Lower lobe of right lung (tissue), 2 donors: ENCODE measurements at regions of chr19 and their contacts with region 1.

Region 1: DNA sequence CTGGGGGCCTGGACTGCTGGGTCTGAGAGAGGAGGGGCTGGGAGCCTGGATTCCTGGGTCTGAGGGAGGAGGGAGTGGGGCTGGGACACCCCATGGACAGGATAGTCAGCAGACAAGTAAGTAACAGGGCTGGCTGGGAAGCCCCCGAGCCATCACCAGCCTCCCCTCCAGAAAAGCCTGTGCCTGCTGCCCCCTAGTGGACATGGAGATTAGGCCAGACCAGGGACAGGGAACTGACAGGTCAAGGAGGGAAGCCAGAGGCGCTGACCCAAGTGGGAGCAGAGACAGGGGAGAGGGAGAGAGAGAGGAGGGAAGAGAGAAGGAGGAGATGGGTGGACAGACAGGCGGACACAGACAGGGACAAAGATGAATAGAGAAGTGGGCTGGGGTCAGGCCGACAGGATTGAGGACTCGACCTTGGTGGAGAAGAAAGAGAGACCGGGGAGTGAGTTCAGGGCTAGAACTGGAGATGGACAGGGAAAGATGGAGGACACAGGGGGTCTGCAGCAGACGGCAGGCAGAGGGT is 6.7 kb upstream of the ERFL start:
- DNase-seq: peak; percentile 70
- ATAC-seq: peak; percentile 69 to 85
- H3K4me3 ChIP-seq: no peak overlapping the region
- H3K27ac ChIP-seq: no peak overlapping the region
- H3K4me1 ChIP-seq: peaks cover 2% of the 10 kb centered on the region
- H3K27me3 ChIP-seq: peaks cover 42% of the 10 kb centered on the region
- CTCF ChIP-seq: peak; percentile 78

Region 2: DNA sequence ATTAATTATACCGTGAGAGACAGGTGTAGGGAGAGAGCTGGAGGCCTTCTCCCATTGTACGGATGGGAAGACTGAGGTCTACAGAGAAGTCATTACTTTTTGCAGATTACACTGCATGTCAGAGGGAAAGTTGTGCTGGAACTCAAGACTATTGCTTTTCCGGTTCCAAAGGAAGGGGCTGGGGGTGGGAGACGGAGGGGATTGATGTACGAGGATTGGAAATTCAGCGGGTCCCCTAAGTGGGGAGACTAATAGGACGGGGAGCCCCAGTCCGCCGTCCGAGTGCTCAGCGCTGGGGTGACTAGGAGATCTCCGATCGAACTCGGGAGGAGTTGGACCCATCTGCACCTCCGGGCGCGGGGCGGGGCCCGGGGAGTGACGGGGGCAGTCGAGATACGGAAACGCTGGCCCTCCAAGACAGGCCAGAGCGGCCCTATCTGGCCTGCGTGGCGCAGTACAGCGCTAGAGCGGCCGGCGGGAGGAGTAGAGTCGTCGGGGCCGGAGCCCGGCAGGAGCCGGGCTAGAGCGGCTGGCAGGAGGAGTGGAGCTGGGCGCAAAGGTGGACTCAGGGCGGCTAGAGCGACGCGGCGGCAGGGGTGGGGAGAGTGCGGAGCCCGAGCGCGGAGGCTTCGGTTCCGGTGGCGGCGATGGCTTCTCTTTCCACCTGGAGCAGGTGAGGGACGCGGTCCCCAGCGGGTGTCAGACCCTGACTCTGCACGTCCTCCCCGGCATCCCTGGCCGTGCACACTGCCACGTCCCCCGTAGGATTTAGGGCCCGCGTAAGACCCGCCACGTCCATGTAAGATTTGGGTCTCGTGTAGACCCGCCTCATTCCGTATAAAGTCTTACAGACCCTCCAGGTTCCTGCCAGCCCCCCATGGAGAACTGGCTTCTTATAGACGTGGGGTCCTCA is 50.8 kb before region 1 on chr19:
- intact Hi-C with region 1: loop called (anchors 10 kb)
- DNase-seq: peak; percentile 97
- ATAC-seq: peak; percentile 91 to 93
- H3K4me3 ChIP-seq: peak overlapping the region; percentile 97
- H3K27ac ChIP-seq: peak overlapping the region; percentile 95
- H3K4me1 ChIP-seq: peaks cover 55% of the 10 kb centered on the region
- H3K27me3 ChIP-seq: no peaks in the 10 kb centered on the region
- CTCF ChIP-seq: peak; percentile 33